Mammary epithelial cell (primary cell): ENCODE measurements at regions of chr12 and their contacts with region 1.

Region 1: DNA sequence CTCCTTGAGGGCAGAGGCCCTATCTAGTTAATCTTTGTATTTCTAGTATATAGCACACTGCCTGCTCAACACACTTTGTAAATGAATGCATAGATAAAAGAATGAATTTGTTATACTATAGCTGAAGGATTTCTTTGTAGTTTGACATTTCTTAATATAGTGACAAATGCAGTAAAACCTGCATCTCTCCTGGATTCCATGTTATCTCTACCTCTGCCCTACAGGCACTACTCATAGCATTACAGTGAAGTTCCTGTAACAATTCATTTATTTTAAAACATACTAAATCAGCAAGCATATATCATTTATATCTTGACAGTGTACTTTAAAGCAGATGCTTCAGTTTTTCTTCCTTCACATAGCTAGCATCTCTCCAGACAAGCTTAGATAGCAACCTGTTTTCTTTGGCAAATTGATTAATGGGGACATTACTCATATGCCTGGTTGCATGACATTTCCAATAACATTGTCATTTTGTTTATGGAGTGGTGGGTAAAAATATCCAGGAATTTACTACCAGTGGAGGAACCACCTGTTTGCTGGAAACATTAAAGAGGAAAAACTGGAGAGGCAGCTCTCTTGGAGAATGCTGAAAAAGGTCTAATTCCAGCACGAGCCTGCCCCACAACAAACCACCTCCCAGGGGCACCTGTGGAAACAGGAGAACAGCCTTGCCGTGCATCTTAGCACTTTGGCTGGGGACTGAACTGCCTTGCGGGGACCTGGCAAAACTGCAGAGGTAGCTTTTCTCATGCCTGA is 12.0 kb upstream of the CREBL2 start:
- DNase-seq: no peak
- H3K4me3 ChIP-seq: no peak overlapping the region
- H3K27ac ChIP-seq: no peak overlapping the region
- H3K4me1 ChIP-seq: no peaks in the 10 kb centered on the region
- H3K27me3 ChIP-seq: no peaks in the 10 kb centered on the region
- CTCF ChIP-seq: no peak

Region 2: GRCh38 chr12:12630850-12631249 is 31.2 kb after region 1 on chr12:
- CTCF ChIA-PET with region 1: no interaction called
- dilution Hi-C with region 1: loop called (anchors 5 kb)
- in situ Hi-C with region 1: no loop called
- intact Hi-C with region 1: no loop called
- DNase-seq: no peak
- H3K4me3 ChIP-seq: no peak overlapping the region
- H3K27ac ChIP-seq: no peak overlapping the region
- H3K4me1 ChIP-seq: no peaks in the 10 kb centered on the region
- H3K27me3 ChIP-seq: no peaks in the 10 kb centered on the region
- CTCF ChIP-seq: no peak

Region 3: DNA sequence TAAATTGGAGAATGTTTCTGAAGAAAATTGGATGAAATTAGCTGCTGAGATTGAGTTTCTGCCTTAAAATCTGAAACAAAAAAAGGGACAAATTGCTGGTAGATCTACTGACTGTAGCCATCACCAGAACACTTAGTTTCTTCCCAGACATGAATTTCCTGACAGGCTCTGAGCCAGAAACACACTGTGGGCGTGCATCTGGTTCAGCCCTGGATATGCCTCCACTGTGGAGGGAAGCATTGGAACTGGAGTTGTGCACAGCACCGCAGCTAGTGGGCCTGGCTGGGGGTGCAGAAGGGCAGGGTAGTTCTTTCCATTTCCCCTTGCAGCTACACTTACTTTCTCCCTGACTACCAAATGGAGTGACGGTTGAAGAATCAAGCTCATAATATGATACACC is 43.2 kb after region 1 on chr12:
- CTCF ChIA-PET with region 1: no interaction called
- dilution Hi-C with region 1: no loop called
- in situ Hi-C with region 1: no loop called
- intact Hi-C with region 1: no loop called
- DNase-seq: no peak
- H3K4me3 ChIP-seq: no peak overlapping the region
- H3K27ac ChIP-seq: no peak overlapping the region
- H3K4me1 ChIP-seq: no peaks in the 10 kb centered on the region
- H3K27me3 ChIP-seq: no peaks in the 10 kb centered on the region
- CTCF ChIP-seq: no peak

Region 4: DNA sequence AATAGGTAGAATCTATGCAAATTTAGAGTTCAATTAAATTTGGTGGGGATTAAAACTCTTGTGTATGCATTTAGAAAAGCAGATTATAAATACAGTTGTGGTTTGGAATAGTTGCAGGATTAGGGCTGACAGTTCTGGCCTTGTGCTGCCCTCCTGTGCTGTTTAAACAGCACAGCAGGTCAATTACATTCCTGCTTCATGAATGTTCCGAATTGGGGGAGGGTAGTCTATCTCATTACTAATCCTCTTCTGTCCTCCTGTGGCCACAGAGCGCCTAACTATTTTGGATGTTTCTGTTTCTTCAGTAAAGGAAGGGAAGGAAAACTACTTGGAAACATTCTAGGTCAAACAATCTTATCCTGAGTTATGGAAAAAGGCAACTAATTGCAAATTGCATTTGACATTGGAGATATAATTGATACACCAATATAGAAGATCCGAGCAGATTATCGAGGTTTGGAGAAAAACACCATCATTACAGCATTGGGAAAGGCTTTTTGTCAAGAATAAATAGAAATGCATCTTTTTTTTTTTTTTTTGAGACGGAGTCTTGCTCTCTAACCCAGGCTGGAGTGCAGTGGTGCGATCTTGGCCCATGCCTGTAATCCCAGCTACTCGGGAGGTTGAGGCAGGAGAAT is 105.0 kb after region 1 on chr12:
- CTCF ChIA-PET with region 1: no interaction called
- dilution Hi-C with region 1: no loop called
- in situ Hi-C with region 1: no loop called
- intact Hi-C with region 1: no loop called
- DNase-seq: peak; percentile 84
- H3K4me3 ChIP-seq: no peak overlapping the region
- H3K27ac ChIP-seq: no peak overlapping the region
- H3K4me1 ChIP-seq: peaks cover 5% of the 10 kb centered on the region
- H3K27me3 ChIP-seq: no peaks in the 10 kb centered on the region
- CTCF ChIP-seq: peak; percentile 99 to 100